ENCODE measurements at regions of chrX and their contacts with region 1.

Region 1: DNA sequence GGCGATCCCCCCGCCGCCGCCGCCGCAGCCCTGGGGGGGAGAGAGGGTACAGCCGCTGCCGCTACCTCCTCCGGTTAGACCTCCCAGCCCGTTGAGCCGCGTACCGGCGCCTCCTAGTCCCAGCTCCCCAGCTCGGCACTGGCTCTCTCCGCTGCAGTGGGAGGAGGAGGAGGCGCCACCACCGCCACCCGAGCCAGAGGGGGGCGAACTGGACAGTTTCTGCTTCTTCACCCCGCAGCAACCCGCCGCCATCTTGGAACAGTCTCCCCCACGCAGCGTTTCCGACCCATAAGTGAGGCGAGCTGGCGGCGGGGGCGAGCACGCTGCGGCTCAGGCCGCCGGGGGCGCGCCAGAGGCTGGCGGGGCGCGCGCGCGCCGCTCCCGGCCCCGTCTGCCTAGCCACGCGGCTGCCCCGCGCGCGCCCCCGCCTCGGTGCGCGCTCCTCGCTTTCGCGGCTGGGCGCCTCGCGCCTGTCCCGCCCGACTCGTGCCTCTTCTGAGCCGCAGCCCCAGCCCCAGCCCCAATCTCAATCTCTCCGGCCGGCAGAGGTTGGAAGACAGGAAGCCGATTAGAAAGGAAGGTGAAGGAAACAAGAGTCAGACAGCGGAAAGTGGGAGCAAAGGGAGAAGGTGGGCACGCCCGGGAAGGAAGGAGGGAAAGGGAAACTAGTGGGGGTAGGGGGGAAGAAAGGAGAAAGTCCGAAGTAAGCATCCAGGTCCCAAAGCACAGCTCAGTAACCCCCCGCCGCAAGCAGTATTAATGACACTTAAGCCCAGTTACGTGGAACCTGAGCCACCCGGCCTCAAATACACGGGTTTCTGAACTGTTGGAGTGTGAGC is at the start of gene AMMECR1:
- DNase-seq: peak; percentile 65 to 91 (median 79)
- ATAC-seq: peak; percentile 86
- H3K4me3 ChIP-seq: peak within 1 kb of the TSS; percentile 75 to 94
- H3K4me3 Mint-ChIP-seq: peak within 1 kb of the TSS; percentile 89
- H3K27ac ChIP-seq: peak within 1 kb of the TSS; percentile 80 to 81
- H3K27ac Mint-ChIP-seq: peak within 1 kb of the TSS; percentile 93
- H3K4me1 ChIP-seq: peaks cover 30% of the 10 kb centered on the region
- H3K4me1 Mint-ChIP-seq: peaks cover 37% of the 10 kb centered on the region
- H3K27me3 ChIP-seq: no peaks in the 10 kb centered on the region
- H3K27me3 Mint-ChIP-seq: no peaks in the 10 kb centered on the region
- CTCF ChIP-seq: no peak
- total RNA-seq, gene AMMECR1: 5.1 to 6.5 TPM

Region 2: GRCh38 chrX:109536439-109537336 is 781.4 kb before region 1 on chrX and contains the start of gene NXT2:
- CTCF ChIA-PET with region 1: no interaction called
- POLR2A ChIA-PET with region 1: no interaction called
- intact Hi-C with region 1: loop called (anchors 2 to 5 kb)
- DNase-seq: peak; percentile 68 to 93 (median 84)
- ATAC-seq: peak; percentile 98
- H3K4me3 ChIP-seq: peak within 1 kb of the TSS; percentile 74 to 80
- H3K4me3 Mint-ChIP-seq: peak within 1 kb of the TSS; percentile 96
- H3K27ac ChIP-seq: peak within 1 kb of the TSS; percentile 72 to 91
- H3K27ac Mint-ChIP-seq: peak within 1 kb of the TSS; percentile 98
- H3K4me1 ChIP-seq: no peaks in the 10 kb centered on the region
- H3K4me1 Mint-ChIP-seq: peaks cover 17% of the 10 kb centered on the region
- H3K27me3 ChIP-seq: no peaks in the 10 kb centered on the region
- H3K27me3 Mint-ChIP-seq: peaks cover 13% of the 10 kb centered on the region
- CTCF ChIP-seq: no peak
- total RNA-seq, gene NXT2: 4.5 to 4.6 TPM

Region 3: DNA sequence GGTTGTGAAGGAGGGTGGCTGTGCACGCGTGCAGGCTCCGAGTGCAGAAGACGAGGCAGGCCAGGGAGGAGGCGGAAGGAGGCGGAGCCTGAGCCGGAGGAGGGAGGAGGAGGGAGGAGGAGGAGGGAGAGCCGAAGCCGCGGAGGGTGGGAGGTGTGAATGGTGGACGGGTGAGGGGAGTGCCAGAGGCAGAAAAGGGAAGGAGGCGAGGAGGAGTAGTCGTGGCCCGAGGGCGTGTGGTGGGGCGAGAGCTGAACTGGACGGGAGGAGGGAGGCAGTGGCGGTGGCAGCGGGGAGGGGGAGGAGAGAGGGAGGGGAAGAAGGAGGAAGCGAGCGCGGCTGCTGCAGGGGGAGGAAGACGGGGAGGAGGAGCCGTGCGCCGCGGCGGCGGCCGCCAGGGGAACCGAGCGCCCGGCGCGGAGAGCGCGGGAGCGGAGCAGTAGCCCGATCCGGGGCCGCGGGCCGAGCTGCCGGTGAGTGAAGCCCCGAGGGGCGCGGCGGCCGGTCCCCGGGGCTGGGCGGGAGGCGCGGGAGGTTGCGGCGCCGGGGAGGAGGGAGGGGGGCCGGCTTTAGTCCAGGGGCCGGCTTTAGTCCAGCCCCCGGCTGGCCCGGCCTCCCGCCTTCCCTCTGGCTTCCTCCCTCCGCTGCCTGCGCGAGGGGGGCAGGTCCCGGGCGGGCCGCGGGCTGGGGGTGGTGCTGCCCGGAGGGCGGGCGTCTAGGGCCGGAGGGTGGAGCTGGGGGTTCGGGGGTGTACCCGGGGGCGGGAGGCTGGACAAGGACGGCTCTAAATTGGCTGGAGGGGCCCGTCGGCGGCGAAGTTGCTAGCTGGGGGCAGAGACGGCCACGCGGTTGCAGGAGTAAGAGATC is 315.5 kb before region 1 on chrX and contains the start of gene TMEM164:
- CTCF ChIA-PET with region 1: no interaction called
- POLR2A ChIA-PET with region 1: no interaction called
- intact Hi-C with region 1: loop called (anchors 5 kb)
- DNase-seq: peak; percentile 60 to 89 (median 79)
- ATAC-seq: peak; percentile 79
- H3K4me3 ChIP-seq: peak within 1 kb of the TSS; percentile 67 to 69
- H3K4me3 Mint-ChIP-seq: peak within 1 kb of the TSS; percentile 89
- H3K27ac ChIP-seq: peak within 1 kb of the TSS; percentile 33 to 67
- H3K27ac Mint-ChIP-seq: peak within 1 kb of the TSS; percentile 92
- H3K4me1 ChIP-seq: peaks cover 9% of the 10 kb centered on the region
- H3K4me1 Mint-ChIP-seq: peaks cover 38% of the 10 kb centered on the region
- H3K27me3 ChIP-seq: no peaks in the 10 kb centered on the region
- H3K27me3 Mint-ChIP-seq: no peaks in the 10 kb centered on the region
- CTCF ChIP-seq: no peak
- total RNA-seq, gene TMEM164: 7.4 to 9.0 TPM

Region 4: GRCh38 chrX:110167952-110168451 is 150.0 kb before region 1 on chrX:
- CTCF ChIA-PET with region 1: no interaction called
- POLR2A ChIA-PET with region 1: no interaction called
- intact Hi-C with region 1: loop called in 1 of 2 experiments (anchors 1 kb)
- DNase-seq: peak; percentile 5 to 72 (median 45)
- ATAC-seq: peak; percentile 56
- H3K4me3 ChIP-seq: no peak overlapping the region
- H3K4me3 Mint-ChIP-seq: no peak overlapping the region
- H3K27ac ChIP-seq: no peak overlapping the region
- H3K27ac Mint-ChIP-seq: no peak overlapping the region
- H3K4me1 ChIP-seq: no peaks in the 10 kb centered on the region
- H3K4me1 Mint-ChIP-seq: peaks cover 7% of the 10 kb centered on the region
- H3K27me3 ChIP-seq: no peaks in the 10 kb centered on the region
- H3K27me3 Mint-ChIP-seq: no peaks in the 10 kb centered on the region
- CTCF ChIP-seq: peak; percentile 38

Region 5: GRCh38 chrX:110241816-110242215 is 76.2 kb before region 1 on chrX:
- CTCF ChIA-PET with region 1: interaction called, 3 read pairs
- POLR2A ChIA-PET with region 1: interaction called, 12 read pairs
- intact Hi-C with region 1: no loop called
- DNase-seq: no peak
- ATAC-seq: no peak
- H3K4me3 ChIP-seq: no peak overlapping the region
- H3K4me3 Mint-ChIP-seq: no peak overlapping the region
- H3K27ac ChIP-seq: no peak overlapping the region
- H3K27ac Mint-ChIP-seq: no peak overlapping the region
- H3K4me1 ChIP-seq: peaks cover 6% of the 10 kb centered on the region
- H3K4me1 Mint-ChIP-seq: peaks cover 54% of the 10 kb centered on the region
- H3K27me3 ChIP-seq: no peaks in the 10 kb centered on the region
- H3K27me3 Mint-ChIP-seq: no peaks in the 10 kb centered on the region
- CTCF ChIP-seq: no peak

Region 6: GRCh38 chrX:111634823-111635729 is 1317.0 kb after region 1 on chrX:
- CTCF ChIA-PET with region 1: no interaction called
- POLR2A ChIA-PET with region 1: no interaction called
- intact Hi-C with region 1: no loop called
- DNase-seq: no peak
- ATAC-seq: no peak
- H3K4me3 ChIP-seq: no peak overlapping the region
- H3K4me3 Mint-ChIP-seq: no peak overlapping the region
- H3K27ac ChIP-seq: no peak overlapping the region
- H3K27ac Mint-ChIP-seq: no peak overlapping the region
- H3K4me1 ChIP-seq: no peaks in the 10 kb centered on the region
- H3K4me1 Mint-ChIP-seq: no peaks in the 10 kb centered on the region
- H3K27me3 ChIP-seq: no peaks in the 10 kb centered on the region
- H3K27me3 Mint-ChIP-seq: no peaks in the 10 kb centered on the region
- CTCF ChIP-seq: no peak

Measured in CD8-positive, alpha-beta T cell (primary cell).